Dendritic cell treated with granulocyte-macrophage colony-stimulating factor and Interleukin-4, amounts not matched to agents 40 ng/mL and 50 ng/mL, for 4 days (primary cell): ENCODE measurements at regions of chr7 and their contacts with region 1.

Region 1: DNA sequence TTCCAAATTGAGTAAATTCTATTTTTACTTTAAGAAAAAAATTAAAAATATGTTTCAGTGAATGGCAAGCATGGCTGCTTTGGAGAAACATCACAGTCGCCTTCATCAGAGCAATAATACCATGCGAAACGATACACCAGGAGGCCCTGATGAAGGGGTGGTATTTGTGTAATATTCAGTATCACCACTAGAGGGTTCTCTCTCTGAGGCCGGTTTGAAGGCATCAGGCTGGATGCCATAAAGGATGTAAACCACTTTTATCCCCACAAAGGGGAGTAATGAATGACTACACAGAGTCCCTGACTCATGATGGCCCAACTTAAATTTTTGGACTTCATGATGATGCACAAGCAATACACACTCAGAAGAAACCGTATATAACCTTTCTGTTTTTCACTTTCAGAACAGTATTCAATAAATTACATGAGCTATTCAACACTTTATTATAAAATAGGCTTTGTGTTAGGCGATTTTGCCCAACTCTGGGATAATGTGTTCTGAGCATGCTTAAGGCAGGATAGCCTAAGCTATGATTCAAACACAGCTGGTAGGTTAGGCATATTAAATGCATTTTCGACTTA is 95.5 kb downstream of the PPP1R17 start:
- H3K4me3 Mint-ChIP-seq: no peak overlapping the region
- H3K27ac Mint-ChIP-seq: no peak overlapping the region
- H3K4me1 Mint-ChIP-seq: no peaks in the 10 kb centered on the region
- H3K27me3 Mint-ChIP-seq: no peaks in the 10 kb centered on the region

Region 2: GRCh38 chr7:31735991-31736982 is 46.2 kb before region 1 on chr7:
- intact Hi-C with region 1: no loop called
- H3K4me3 Mint-ChIP-seq: no peak overlapping the region
- H3K27ac Mint-ChIP-seq: no peak overlapping the region
- H3K4me1 Mint-ChIP-seq: no peaks in the 10 kb centered on the region
- H3K27me3 Mint-ChIP-seq: no peaks in the 10 kb centered on the region

Region 3: DNA sequence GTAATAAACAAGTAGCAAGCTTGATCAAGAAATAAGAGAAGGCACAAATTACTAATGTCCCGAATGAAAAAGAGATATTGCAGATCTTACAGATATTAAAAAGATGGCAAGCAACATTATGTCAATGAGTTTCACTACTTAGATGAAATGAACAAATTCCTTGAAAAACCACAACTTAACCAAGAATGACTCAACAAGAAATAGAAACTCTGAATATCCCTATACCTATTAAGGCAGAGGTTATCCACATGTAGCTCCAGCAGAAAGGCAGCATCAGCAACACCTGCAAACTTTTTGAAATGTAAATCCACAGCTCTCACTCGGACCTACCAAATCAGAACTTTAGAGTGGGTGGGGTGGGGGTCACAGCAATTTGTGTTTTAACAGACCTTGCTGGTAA is 254.1 kb after region 1 on chr7:
- intact Hi-C with region 1: loop called (anchors 5 kb)
- H3K4me3 Mint-ChIP-seq: no peak overlapping the region
- H3K27ac Mint-ChIP-seq: no peak overlapping the region
- H3K4me1 Mint-ChIP-seq: no peaks in the 10 kb centered on the region
- H3K27me3 Mint-ChIP-seq: no peaks in the 10 kb centered on the region

Region 4: GRCh38 chr7:32062150-32062549 is 279.6 kb after region 1 on chr7:
- intact Hi-C with region 1: loop called (anchors 2 kb)
- H3K4me3 Mint-ChIP-seq: no peak overlapping the region
- H3K27ac Mint-ChIP-seq: no peak overlapping the region
- H3K4me1 Mint-ChIP-seq: no peaks in the 10 kb centered on the region
- H3K27me3 Mint-ChIP-seq: no peaks in the 10 kb centered on the region